PC-3 (cell line): ENCODE measurements at regions of chr7 and their contacts with region 1.

Region 1: GRCh38 chr7:5450549-5451372 is 27.1 kb upstream of the TNRC18 start:
- DNase-seq: peak; percentile 32
- ATAC-seq: peak; percentile 67
- H3K4me3 ChIP-seq: no peak overlapping the region
- H3K27ac ChIP-seq: no peak overlapping the region
- H3K4me1 ChIP-seq: no peaks in the 10 kb centered on the region
- H3K27me3 ChIP-seq: no peaks in the 10 kb centered on the region
- CTCF ChIP-seq: peak; percentile 77

Region 2: GRCh38 chr7:5088906-5089305 is 361.9 kb before region 1 on chr7:
- CTCF ChIA-PET with region 1: interaction called, 12 read pairs
- POLR2A ChIA-PET with region 1: no interaction called
- intact Hi-C with region 1: no loop called
- DNase-seq: peak; percentile 65
- ATAC-seq: peak; percentile 16; the same call in 1 of the 2 replicates
- H3K4me3 ChIP-seq: no peak overlapping the region
- H3K27ac ChIP-seq: no peak overlapping the region
- H3K4me1 ChIP-seq: peaks cover 5% of the 10 kb centered on the region; the same call in 1 of the 2 replicates
- H3K27me3 ChIP-seq: no peaks in the 10 kb centered on the region
- CTCF ChIP-seq: 0 out of 2 replicates have a peak, but pooled peaks have one; percentile 9

Region 3: DNA sequence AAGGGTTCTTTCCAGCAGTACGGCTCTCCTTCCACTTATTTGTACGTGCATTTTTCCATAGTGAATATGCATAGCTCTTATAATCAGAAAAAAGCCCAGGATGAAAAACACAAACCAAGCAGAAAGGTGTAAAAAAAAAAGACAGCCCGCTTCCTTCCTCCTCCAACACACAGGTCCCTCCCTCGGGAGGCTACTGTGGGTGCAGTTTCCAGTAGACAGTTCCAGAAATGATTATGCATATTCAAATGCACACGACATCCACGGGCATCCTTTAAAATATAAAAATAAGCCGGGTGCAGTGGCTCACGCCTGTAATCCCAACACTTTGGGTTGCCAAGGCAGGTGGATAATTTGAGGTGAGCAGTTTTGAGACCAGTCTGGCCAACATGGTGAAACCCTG is 87.0 kb before region 1 on chr7:
- CTCF ChIA-PET with region 1: interaction called, 5 read pairs
- POLR2A ChIA-PET with region 1: no interaction called
- intact Hi-C with region 1: loop called (anchors 1 kb)
- DNase-seq: no peak
- ATAC-seq: no peak
- H3K4me3 ChIP-seq: no peak overlapping the region
- H3K27ac ChIP-seq: no peak overlapping the region
- H3K4me1 ChIP-seq: no peaks in the 10 kb centered on the region
- H3K27me3 ChIP-seq: no peaks in the 10 kb centered on the region
- CTCF ChIP-seq: no peak